ENCODE measurements at regions of chr5 and their contacts with region 1.

Region 1: DNA sequence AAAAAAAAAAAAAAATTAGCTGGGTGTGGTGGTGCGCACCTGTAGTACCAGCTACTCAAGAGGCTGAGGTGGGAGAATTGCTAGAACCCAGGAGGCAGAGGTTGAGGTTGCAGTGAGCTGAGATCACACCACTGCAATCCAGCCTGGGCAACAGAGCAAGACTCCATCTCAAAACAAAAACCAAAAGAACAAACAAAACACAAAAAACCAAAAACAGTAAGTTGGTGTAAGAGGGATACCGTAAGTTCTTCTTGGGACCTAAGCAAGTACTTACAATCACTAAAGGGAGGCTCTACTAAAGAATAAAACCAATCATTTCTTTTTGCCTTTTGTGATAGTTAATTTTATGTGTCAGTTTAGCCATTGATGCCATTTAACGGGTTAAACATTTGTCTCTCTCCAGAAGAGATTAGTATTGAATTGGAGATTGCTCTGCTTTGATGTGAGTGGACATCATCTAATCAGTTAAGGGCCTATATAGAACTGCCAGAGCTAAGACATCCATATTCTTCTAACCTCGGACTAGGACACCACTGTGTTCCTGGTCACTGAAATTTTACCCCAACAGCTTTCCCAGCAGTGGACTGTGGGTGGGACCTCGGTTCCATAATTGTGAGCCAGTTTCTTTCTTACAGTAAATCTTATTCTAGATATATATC is 10.5 kb upstream of the ETF1 start:
- DNase-seq: no peak
- ATAC-seq: no peak
- H3K4me3 Mint-ChIP-seq: no peak overlapping the region
- H3K27ac Mint-ChIP-seq: peak overlapping the region; percentile 25
- H3K4me1 Mint-ChIP-seq: peaks cover 7% of the 10 kb centered on the region
- H3K27me3 Mint-ChIP-seq: no peaks in the 10 kb centered on the region

Region 2: GRCh38 chr5:138449501-138450239 is 103.9 kb before region 1 on chr5:
- CTCF ChIA-PET with region 1: interaction called, 15 read pairs
- POLR2A ChIA-PET with region 1: no interaction called
- intact Hi-C with region 1: no loop called
- DNase-seq: peak; percentile 93
- ATAC-seq: peak; percentile 97
- H3K4me3 Mint-ChIP-seq: peak overlapping the region; percentile 23
- H3K27ac Mint-ChIP-seq: peak overlapping the region; percentile 47
- H3K4me1 Mint-ChIP-seq: peaks cover 5% of the 10 kb centered on the region
- H3K27me3 Mint-ChIP-seq: no peaks in the 10 kb centered on the region

Region 3: DNA sequence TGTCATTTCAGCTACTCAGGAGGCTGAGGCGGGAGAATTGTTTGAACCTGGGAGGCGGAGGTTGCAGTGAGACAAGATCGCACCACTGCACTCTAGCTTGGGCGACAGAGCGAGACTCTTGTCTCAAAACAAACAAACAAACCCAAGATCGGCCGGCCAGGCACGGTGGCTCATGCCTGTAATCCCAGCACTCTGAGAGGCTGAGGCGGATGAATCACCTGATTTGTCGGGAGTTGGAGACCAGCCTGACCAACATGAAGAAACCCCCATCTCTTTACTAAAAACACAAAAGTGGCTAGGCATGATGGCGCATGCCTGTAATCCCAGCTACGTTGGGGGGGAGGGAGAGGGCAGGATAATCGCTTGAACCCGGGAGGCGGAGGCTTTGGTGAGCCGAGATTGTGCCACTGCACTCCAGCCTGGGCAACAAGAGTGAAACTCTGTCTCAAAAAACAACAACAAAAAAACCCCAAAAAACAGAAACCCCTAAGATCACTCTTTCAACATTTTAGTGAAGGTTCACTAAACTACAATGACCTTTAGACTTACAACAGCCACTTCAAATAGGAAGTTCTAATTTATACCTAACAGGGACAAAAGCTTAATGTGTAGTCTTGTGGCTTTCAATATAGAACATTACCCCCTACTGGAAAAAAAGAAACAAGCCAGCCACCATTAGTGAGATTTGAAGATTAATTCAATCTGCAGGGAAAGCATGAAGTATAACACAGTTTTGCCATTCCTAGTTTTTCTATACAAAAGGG is 14.7 kb after region 1 on chr5:
- CTCF ChIA-PET with region 1: interaction called, 16 read pairs
- POLR2A ChIA-PET with region 1: interaction called, 4 read pairs
- intact Hi-C with region 1: loop called in 1 of 2 experiments (anchors 2 kb)
- DNase-seq: no peak
- ATAC-seq: no peak
- H3K4me3 Mint-ChIP-seq: no peak overlapping the region
- H3K27ac Mint-ChIP-seq: peak overlapping the region; percentile 37
- H3K4me1 Mint-ChIP-seq: peaks cover 77% of the 10 kb centered on the region
- H3K27me3 Mint-ChIP-seq: no peaks in the 10 kb centered on the region

Measured in activated CD4-positive, alpha-beta T cell treated with anti-CD3 and anti-CD28 coated beads for 36 hours (primary cell).